Heart left ventricle (tissue), 16 donors: ENCODE measurements at regions of chr11 and their contacts with region 1.

Region 1: GRCh38 chr11:126491092-126491491 is 135.6 kb downstream of the ST3GAL4 start:
- DNase-seq: no peak
- ATAC-seq: no peak
- H3K4me3 ChIP-seq: no peak overlapping the region
- H3K27ac ChIP-seq: no peak overlapping the region
- H3K4me1 ChIP-seq: no peaks in the 10 kb centered on the region
- H3K27me3 ChIP-seq: no peaks in the 10 kb centered on the region
- CTCF ChIP-seq: no peak
- POLR2A ChIP-seq: no peak

Region 2: GRCh38 chr11:126561327-126561893 is 70.3 kb after region 1 on chr11:
- intact Hi-C with region 1: loop called in 1 of 10 experiments (anchors 10 kb)
- DNase-seq: peak in 4 of 5 donors; percentile 18 to 49 (median 38)
- ATAC-seq: peak in 3 of 4 donors; percentile 50 to 53 (median 52)
- H3K4me3 ChIP-seq: no peak overlapping the region
- H3K27ac ChIP-seq: no peak overlapping the region
- H3K4me1 ChIP-seq: no peaks in the 10 kb centered on the region
- H3K27me3 ChIP-seq: peaks cover 0 to 23% (median 0%) of the 10 kb centered on the region in 9 donors
- CTCF ChIP-seq: no peak
- POLR2A ChIP-seq: no peak

Region 3: GRCh38 chr11:126573325-126574076 is 82.4 kb after region 1 on chr11:
- intact Hi-C with region 1: no loop called
- DNase-seq: no peak
- ATAC-seq: no peak
- H3K4me3 ChIP-seq: no peak overlapping the region
- H3K27ac ChIP-seq: no peak overlapping the region
- H3K4me1 ChIP-seq: no peaks in the 10 kb centered on the region
- H3K27me3 ChIP-seq: peaks cover 0 to 16% (median 0%) of the 10 kb centered on the region in 9 donors
- CTCF ChIP-seq: peak in 1 of 12 donors; percentile 11
- POLR2A ChIP-seq: no peak